Activated T-helper 1 cell treated with anti-CD3 and anti-CD28 coated beads, Interleukin-12 subunit alpha, Interleukin-12 subunit beta, Interleukin-2, Interleukin-4 antibody, amounts not matched to agents 30 ng/mL and 10 ng/mL and 1 ng/mL, durations not matched to agents 14 hours and 24 hours and 36 hours (primary cell): ENCODE measurements at regions of chr12 and their contacts with region 1.

Region 1: GRCh38 chr12:117098361-117099217 is 627 bp downstream of the TESC start:
- DNase-seq: peak; percentile 17
- H3K4me3 Mint-ChIP-seq: peak overlapping the region; percentile 88
- H3K27ac Mint-ChIP-seq: peak overlapping the region; percentile 55
- H3K4me1 Mint-ChIP-seq: peaks cover 31% of the 10 kb centered on the region
- H3K27me3 Mint-ChIP-seq: peaks cover 19% of the 10 kb centered on the region

Region 2: GRCh38 chr12:116737774-116738700 is 360.6 kb before region 1 on chr12 and contains the starts of genes RNFT2 and SPRING1:
- intact Hi-C with region 1: loop called (anchors 1 kb)
- DNase-seq: peak; percentile 99
- H3K4me3 Mint-ChIP-seq: peak within 1 kb of the TSS; percentile 85
- H3K27ac Mint-ChIP-seq: peak within 1 kb of the TSS; percentile 85
- H3K4me1 Mint-ChIP-seq: peaks cover 13% of the 10 kb centered on the region
- H3K27me3 Mint-ChIP-seq: no peaks in the 10 kb centered on the region
- total RNA-seq, gene RNFT2: 8.0 and 11.8 TPM in 2 replicates
- total RNA-seq, gene SPRING1: 31.0 and 39.0 TPM in 2 replicates

Region 3: GRCh38 chr12:116955382-116956021 is 143.1 kb before region 1 on chr12:
- intact Hi-C with region 1: loop called (anchors 1 kb)
- DNase-seq: no peak
- H3K4me3 Mint-ChIP-seq: no peak overlapping the region
- H3K27ac Mint-ChIP-seq: no peak overlapping the region
- H3K4me1 Mint-ChIP-seq: peaks cover 32% of the 10 kb centered on the region
- H3K27me3 Mint-ChIP-seq: no peaks in the 10 kb centered on the region

Region 4: DNA sequence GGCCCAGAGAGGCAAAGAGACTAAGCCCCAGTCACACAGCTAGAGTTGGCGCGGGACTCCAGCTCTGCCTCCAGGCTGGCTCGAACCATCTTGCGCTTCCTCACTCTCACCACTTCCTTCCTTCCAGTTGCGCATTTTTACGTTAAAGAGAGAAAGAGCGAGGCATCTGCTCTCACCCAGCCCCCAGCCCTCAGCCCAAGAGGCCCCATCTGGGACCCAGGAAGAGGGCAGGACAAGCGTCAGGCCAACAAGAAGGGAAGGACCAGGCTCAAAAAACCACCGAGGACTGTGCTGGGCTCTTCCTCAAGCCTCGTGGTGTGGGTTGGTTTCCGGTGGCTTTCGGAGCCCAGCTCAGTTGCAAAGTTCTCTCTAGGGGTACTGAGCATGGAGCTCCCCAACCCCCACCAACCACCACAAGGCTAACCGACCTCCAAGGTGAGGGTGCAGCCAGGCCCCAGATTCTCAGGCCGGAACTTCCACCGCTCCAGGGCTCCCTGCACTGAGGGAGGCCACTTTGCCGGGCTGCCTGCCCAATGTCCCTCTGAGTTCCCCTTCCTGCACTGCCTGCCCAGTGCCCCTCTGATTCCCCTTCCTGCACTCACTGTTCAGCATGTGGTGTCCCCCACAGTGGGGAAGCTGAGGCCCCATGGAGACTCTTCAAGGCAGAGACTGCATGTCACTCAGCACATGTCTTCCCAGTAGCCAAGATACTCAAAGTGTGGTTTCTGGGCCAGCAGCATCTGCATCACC is 35.3 kb before region 1 on chr12:
- intact Hi-C with region 1: loop called (anchors 1 kb)
- DNase-seq: peak; percentile 44
- H3K4me3 Mint-ChIP-seq: peak overlapping the region; percentile 67
- H3K27ac Mint-ChIP-seq: peak overlapping the region; percentile 94
- H3K4me1 Mint-ChIP-seq: peaks cover 49% of the 10 kb centered on the region
- H3K27me3 Mint-ChIP-seq: no peaks in the 10 kb centered on the region

Region 5: DNA sequence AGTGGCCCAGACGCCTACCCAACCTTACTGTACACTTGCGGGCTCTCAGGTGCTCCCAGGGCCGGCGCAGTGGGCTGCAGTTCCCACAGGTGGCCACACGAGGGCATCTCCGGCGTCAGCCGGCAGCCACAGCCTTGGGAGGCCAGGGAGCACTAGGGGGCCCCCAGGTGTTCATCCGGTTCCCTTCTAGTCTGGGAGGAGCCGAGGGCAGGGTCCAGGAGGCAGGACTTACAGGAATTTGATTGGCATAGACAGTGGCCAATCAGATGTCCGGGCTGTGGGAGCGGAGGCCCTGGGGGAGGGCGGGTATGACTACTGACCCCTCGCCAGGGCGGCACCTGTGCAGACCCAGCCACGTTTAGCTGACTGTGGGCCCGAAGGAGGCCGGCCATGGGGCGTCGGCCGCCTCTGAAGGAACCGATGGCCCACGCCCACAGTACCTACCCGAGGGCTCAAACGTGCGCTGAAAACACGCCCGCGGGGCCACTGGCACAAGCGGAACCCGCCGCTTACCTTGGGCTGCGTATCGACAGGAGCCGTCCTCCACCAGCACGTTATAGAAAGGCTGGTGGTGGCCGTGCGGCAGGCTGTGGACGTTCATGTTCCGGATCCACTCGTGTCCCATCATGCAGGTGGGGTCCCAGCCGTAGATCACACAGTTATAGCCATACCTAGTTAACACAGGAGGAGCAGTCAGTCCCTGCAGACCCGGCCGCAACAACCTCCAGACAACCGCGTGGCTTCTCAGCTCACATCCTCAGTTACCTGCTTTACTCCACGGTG is 56.9 kb after region 1 on chr12:
- intact Hi-C with region 1: loop called (anchors 1 kb)
- DNase-seq: peak; percentile 62
- H3K4me3 Mint-ChIP-seq: no peak overlapping the region
- H3K27ac Mint-ChIP-seq: no peak overlapping the region
- H3K4me1 Mint-ChIP-seq: peaks cover 29% of the 10 kb centered on the region
- H3K27me3 Mint-ChIP-seq: no peaks in the 10 kb centered on the region